Body of pancreas (tissue), 4 donors: ENCODE measurements at regions of chr9 and their contacts with region 1.

Region 1: GRCh38 chr9:74773886-74774479 is 113.7 kb downstream of the TRPM6 start:
- DNase-seq: peak; percentile 81 to 89 (median 83)
- ATAC-seq: peak; percentile 77
- H3K4me3 ChIP-seq: no peak overlapping the region
- H3K27ac ChIP-seq: no peak overlapping the region
- H3K4me1 ChIP-seq: no peaks in the 10 kb centered on the region
- H3K27me3 ChIP-seq: no peaks in the 10 kb centered on the region
- CTCF ChIP-seq: peak; percentile 76 to 94 (median 83)
- POLR2A ChIP-seq: no peak

Region 2: GRCh38 chr9:75001719-75002422 is 227.9 kb after region 1 on chr9:
- intact Hi-C with region 1: loop called (anchors 5 kb)
- DNase-seq: peak in 1 of 4 donors; percentile 7
- ATAC-seq: peak; percentile 92
- H3K4me3 ChIP-seq: no peak overlapping the region
- H3K27ac ChIP-seq: peak overlapping the region in 1 of 4 donors; percentile 12
- H3K4me1 ChIP-seq: peaks cover 4% of the 10 kb centered on the region
- H3K27me3 ChIP-seq: no peaks in the 10 kb centered on the region
- CTCF ChIP-seq: peak; percentile 42 to 81 (median 72)
- POLR2A ChIP-seq: no peak

Region 3: GRCh38 chr9:75071530-75072124 is 297.6 kb after region 1 on chr9:
- intact Hi-C with region 1: loop called (anchors 10 kb)
- DNase-seq: peak in 1 of 4 donors; percentile 43
- ATAC-seq: no peak
- H3K4me3 ChIP-seq: no peak overlapping the region
- H3K27ac ChIP-seq: no peak overlapping the region
- H3K4me1 ChIP-seq: no peaks in the 10 kb centered on the region
- H3K27me3 ChIP-seq: no peaks in the 10 kb centered on the region
- CTCF ChIP-seq: no peak
- POLR2A ChIP-seq: no peak